Dendritic cell treated with granulocyte-macrophage colony-stimulating factor and Interleukin-4, amounts not matched to agents 40 ng/mL and 50 ng/mL, for 4 days (primary cell): ENCODE measurements at regions of chr6 and their contacts with region 1.

Region 1: DNA sequence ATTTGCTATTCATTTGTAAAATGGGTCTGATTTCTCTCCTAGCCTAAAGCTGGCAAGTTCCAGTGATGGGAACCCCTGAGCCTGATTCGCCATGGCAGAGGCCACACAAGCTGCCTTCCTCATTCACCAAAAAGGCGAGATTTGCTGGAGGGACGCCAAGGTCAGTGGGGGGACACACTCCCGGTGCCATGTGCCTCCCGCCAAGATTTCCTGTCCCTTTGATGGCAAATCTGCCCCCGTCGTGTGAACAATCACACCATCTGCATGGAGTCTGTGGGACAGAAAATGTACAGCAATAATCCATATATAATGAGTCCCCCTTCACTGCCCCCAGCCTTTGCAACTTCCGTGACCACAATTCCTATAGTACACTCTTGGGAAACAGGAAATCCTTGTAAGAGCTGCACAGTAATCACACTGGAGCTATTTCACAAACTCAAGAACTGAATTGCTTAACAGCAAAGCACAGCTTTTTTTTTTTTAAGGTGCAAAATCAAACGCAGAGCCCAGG is 15.7 kb upstream of the IGF2R start:
- H3K4me3 Mint-ChIP-seq: no peak overlapping the region
- H3K27ac Mint-ChIP-seq: no peak overlapping the region
- H3K4me1 Mint-ChIP-seq: peaks cover 47% of the 10 kb centered on the region
- H3K27me3 Mint-ChIP-seq: peaks cover 3% of the 10 kb centered on the region

Region 2: DNA sequence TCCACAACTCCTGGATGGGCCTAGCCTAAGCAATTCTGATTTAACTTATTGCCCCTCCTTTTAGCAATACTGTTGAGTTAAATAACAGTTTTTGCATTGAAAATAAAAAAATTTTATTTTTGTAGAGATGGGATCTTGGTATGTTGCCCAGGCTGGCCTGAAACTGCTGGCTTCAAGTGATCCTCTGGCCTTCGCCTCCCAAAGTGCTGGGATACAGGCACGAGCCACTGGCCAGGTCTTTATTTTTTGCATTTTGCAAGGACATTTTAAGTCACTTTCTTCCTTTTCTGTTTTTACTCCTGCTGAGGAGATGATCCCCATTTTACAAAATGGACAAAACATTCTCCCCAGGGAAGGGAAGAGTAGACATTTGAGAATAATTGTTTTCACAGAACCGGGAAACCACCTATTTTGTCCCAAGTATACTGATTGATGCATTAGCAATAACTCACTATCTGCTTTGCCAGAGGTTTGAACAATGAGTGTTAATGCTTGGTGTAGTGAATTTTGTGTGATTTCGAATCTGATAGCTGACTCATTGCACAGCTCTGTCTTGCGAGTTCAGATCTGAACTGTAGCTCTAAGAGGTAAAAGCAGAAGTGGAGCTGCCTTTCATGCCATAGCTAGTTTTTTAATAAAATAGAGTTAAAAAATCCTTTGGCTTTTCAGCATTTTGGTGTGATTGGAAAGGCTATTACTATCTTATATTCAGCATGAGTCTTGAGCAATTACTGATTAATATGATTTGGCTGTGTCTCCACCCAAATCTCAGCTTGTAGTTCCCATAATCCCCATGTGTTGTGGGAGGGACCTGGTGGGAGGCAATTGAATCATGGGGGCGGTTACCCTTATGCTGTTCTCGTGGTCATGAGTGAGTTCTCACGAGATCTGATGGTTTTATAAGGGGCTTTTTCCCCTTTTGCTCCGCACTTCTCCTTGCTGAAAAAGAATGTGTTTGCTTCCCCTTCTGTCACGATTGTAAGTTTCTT is 36.6 kb after region 1 on chr6:
- intact Hi-C with region 1: loop called (anchors 5 kb)
- H3K4me3 Mint-ChIP-seq: no peak overlapping the region
- H3K27ac Mint-ChIP-seq: peak overlapping the region; percentile 67
- H3K4me1 Mint-ChIP-seq: peaks cover 72% of the 10 kb centered on the region
- H3K27me3 Mint-ChIP-seq: no peaks in the 10 kb centered on the region